HEK293T (cell line): ENCODE measurements at regions of chr7 and their contacts with region 1.

Region 1: DNA sequence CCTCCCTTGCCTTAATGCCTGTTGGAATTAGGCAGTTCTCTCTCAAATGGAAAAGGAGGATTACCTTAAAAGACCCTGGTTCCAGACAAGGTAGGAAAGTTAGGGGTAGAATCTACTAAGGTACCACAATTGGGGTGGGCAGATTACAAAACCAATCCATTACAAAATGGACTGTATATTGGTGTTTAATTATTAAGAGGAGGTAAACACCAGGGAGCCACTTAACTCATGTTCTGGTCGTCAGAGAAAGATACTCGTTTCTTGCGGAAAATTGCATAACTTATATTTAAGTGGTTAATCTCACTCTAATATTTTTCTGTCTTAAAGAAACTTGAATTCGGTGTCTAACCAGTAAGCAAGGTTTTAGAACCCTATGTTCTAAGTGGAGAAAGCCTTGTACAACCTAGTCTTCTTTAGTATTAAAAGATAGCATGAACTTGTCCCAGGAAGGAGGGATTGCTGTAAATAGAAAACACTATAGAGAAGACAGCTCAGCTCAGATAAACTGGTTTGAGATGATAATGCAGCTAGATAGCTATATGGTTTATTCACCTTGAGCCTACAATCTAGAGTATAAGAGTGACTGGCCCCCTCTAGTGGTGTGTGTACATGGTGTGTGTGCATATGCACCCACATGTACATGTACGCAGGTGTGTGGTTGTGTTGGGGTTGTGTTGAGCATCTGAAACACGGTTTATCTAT is 58.0 kb upstream of the STRIP2 start:
- DNase-seq: peak; percentile 51

Region 2: DNA sequence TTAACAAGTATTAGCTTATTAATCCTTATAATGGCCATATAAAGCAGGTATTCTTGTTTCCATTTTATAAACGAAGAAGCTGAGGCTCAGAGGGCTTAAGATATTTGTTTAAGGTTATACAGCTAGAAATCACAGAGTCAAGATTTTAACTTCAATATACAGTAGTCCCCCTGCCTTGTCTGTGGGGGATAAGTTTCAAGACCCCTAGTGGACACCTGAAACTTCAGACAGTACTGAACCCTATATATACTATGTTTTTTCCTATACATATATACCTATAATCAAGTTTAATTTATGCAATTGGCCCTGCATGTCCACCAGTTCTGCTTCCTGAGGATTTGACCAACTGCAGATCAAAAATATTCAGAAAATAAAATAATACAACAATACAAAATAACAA is 13.6 kb after region 1 on chr7:
- CTCF ChIA-PET with region 1: interaction called, 11 read pairs
- POLR2A ChIA-PET with region 1: interaction called, 5 read pairs
- DNase-seq: no peak